ENCODE measurements at regions of chr2 and their contacts with region 1.

Region 1: GRCh38 chr2:177212106-177212890 is at the start of gene HNRNPA3:
- DNase-seq: peak; percentile 99 to 100 (median 100)
- ATAC-seq: peak; percentile 93
- H3K4me3 ChIP-seq: peak within 1 kb of the TSS; percentile 87
- H3K4me3 Mint-ChIP-seq: peak within 1 kb of the TSS; percentile 88 to 96 (median 94)
- H3K27ac ChIP-seq: peak within 1 kb of the TSS; percentile 99
- H3K27ac Mint-ChIP-seq: peak within 1 kb of the TSS; percentile 98 to 100 (median 99)
- H3K4me1 ChIP-seq: peaks cover 38 to 43% of the 10 kb centered on the region in 2 donors
- H3K4me1 Mint-ChIP-seq: peaks cover 27 to 60% (median 48%) of the 10 kb centered on the region in 7 donors
- H3K27me3 ChIP-seq: no peaks in the 10 kb centered on the region
- H3K27me3 Mint-ChIP-seq: peaks cover 0 to 6% (median 0%) of the 10 kb centered on the region in 5 donors
- total RNA-seq, gene HNRNPA3: 151 to 311 (median 184) TPM

Region 2: GRCh38 chr2:176269319-176270099 is 942.8 kb before region 1 on chr2 and contains the start of gene MTX2:
- CTCF ChIA-PET with region 1: no interaction called
- POLR2A ChIA-PET with region 1: no interaction called
- intact Hi-C with region 1: loop called in 1 of 2 experiments (anchors 1 kb)
- DNase-seq: peak; percentile 48 to 80 (median 75)
- ATAC-seq: peak; percentile 92
- H3K4me3 ChIP-seq: peak within 1 kb of the TSS; percentile 97
- H3K4me3 Mint-ChIP-seq: peak within 1 kb of the TSS; percentile 95 to 99 (median 97)
- H3K27ac ChIP-seq: peak within 1 kb of the TSS; percentile 84
- H3K27ac Mint-ChIP-seq: peak within 1 kb of the TSS; percentile 70 to 97 (median 92)
- H3K4me1 ChIP-seq: peaks cover 7 to 8% of the 10 kb centered on the region in 2 donors
- H3K4me1 Mint-ChIP-seq: peaks cover 16 to 46% (median 39%) of the 10 kb centered on the region in 7 donors
- H3K27me3 ChIP-seq: no peaks in the 10 kb centered on the region
- H3K27me3 Mint-ChIP-seq: peaks cover 0 to 19% (median 9%) of the 10 kb centered on the region in 5 donors
- total RNA-seq, gene MTX2: 6.6 to 14.3 (median 9.3) TPM

Region 3: DNA sequence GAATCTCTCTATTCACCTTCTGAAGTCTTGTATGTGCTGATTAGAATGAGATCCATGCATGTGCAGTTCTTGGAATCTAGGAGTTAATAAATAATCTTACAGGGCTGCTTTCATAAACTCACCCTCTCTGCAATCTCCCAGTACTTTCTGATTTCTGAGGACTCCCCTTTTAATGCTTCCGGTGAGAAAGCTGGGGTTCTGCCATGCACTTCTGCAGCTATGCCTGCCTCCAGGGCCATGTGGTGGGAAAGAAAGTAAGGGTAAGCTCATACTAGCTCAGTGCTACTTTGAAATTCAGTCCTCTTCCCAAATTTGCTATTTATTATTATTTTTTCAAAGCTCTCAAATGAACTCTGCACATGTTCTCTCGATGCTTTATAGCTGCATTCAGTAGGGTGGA is 510.1 kb before region 1 on chr2:
- CTCF ChIA-PET with region 1: no interaction called
- POLR2A ChIA-PET with region 1: no interaction called
- intact Hi-C with region 1: no loop called
- DNase-seq: no peak
- ATAC-seq: no peak
- H3K4me3 ChIP-seq: no peak overlapping the region
- H3K4me3 Mint-ChIP-seq: no peak overlapping the region
- H3K27ac ChIP-seq: no peak overlapping the region
- H3K27ac Mint-ChIP-seq: no peak overlapping the region
- H3K4me1 ChIP-seq: no peaks in the 10 kb centered on the region
- H3K4me1 Mint-ChIP-seq: no peaks in the 10 kb centered on the region
- H3K27me3 ChIP-seq: peaks cover 0 to 3% of the 10 kb centered on the region in 2 donors
- H3K27me3 Mint-ChIP-seq: peaks cover 15 to 42% (median 19%) of the 10 kb centered on the region in 5 donors

Region 4: GRCh38 chr2:177229448-177230242 is 17.3 kb after region 1 on chr2:
- CTCF ChIA-PET with region 1: interaction called, 3 read pairs
- POLR2A ChIA-PET with region 1: interaction called, 15 read pairs
- intact Hi-C with region 1: loop called (anchors 1 to 2 kb)
- DNase-seq: no peak
- ATAC-seq: no peak
- H3K4me3 ChIP-seq: no peak overlapping the region
- H3K4me3 Mint-ChIP-seq: no peak overlapping the region
- H3K27ac ChIP-seq: no peak overlapping the region
- H3K27ac Mint-ChIP-seq: peak overlapping the region; percentile 36 to 87 (median 74)
- H3K4me1 ChIP-seq: no peaks in the 10 kb centered on the region
- H3K4me1 Mint-ChIP-seq: peaks cover 21 to 57% (median 53%) of the 10 kb centered on the region in 7 donors
- H3K27me3 ChIP-seq: no peaks in the 10 kb centered on the region
- H3K27me3 Mint-ChIP-seq: no peaks in the 10 kb centered on the region

Region 5: GRCh38 chr2:177314194-177314593 is 101.9 kb after region 1 on chr2:
- CTCF ChIA-PET with region 1: no interaction called
- POLR2A ChIA-PET with region 1: interaction called, 14 read pairs
- intact Hi-C with region 1: loop called in 1 of 2 experiments (anchors 1 kb)
- DNase-seq: no peak
- ATAC-seq: no peak
- H3K4me3 ChIP-seq: no peak overlapping the region
- H3K4me3 Mint-ChIP-seq: no peak overlapping the region
- H3K27ac ChIP-seq: no peak overlapping the region
- H3K27ac Mint-ChIP-seq: peak overlapping the region in 7 of 9 donors; percentile 36 to 97 (median 73)
- H3K4me1 ChIP-seq: peaks cover 6 to 13% of the 10 kb centered on the region in 2 donors
- H3K4me1 Mint-ChIP-seq: peaks cover 17 to 54% (median 31%) of the 10 kb centered on the region in 7 donors
- H3K27me3 ChIP-seq: no peaks in the 10 kb centered on the region
- H3K27me3 Mint-ChIP-seq: no peaks in the 10 kb centered on the region

Region 6: DNA sequence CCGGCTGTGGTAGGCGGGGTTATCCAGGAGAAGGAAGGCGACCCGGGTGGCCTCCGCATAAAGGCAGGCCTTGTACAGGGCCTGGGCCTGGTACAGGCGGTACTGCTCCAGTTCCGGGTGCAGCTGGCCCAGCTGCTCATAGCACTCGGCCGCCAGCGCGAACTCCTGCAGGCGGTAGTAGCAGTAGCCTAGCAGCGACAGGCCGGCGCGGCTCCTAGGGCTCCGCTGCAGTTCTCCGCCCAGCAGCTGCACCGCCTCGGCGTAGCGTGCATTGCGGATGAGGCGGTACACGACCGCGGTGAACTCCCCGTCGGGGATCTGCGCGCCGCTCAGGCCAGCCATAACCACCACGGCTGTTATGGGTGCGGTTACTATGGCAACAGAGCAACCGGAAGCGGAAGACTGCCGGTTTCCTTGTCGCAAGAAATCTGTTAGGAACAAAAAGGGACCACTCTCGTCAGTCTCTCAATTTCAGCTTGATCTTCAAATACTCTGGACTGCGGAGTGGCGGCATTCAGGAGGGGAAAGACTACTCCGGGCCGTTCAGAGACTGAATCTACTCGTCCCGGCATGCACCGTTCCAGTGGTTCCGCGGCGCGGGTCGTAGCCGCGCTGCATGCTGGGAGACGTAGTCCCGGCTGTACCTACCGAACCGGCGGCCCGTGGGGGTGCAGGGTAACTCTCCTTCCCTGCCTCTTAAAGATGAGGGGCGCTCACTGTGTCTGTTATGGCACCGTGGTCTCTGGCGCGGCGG is 340.3 kb after region 1 on chr2:
- CTCF ChIA-PET with region 1: no interaction called
- POLR2A ChIA-PET with region 1: no interaction called
- intact Hi-C with region 1: loop called (anchors 1 kb)
- DNase-seq: peak; percentile 82 to 96 (median 94)
- ATAC-seq: peak; percentile 94
- H3K4me3 ChIP-seq: peak overlapping the region; percentile 89
- H3K4me3 Mint-ChIP-seq: peak overlapping the region; percentile 87 to 99 (median 94)
- H3K27ac ChIP-seq: peak overlapping the region; percentile 100
- H3K27ac Mint-ChIP-seq: peak overlapping the region; percentile 98 to 100 (median 99)
- H3K4me1 ChIP-seq: no peaks in the 10 kb centered on the region
- H3K4me1 Mint-ChIP-seq: peaks cover 4 to 29% (median 14%) of the 10 kb centered on the region in 7 donors
- H3K27me3 ChIP-seq: no peaks in the 10 kb centered on the region
- H3K27me3 Mint-ChIP-seq: peaks cover 0 to 14% (median 4%) of the 10 kb centered on the region in 5 donors

Region 7: DNA sequence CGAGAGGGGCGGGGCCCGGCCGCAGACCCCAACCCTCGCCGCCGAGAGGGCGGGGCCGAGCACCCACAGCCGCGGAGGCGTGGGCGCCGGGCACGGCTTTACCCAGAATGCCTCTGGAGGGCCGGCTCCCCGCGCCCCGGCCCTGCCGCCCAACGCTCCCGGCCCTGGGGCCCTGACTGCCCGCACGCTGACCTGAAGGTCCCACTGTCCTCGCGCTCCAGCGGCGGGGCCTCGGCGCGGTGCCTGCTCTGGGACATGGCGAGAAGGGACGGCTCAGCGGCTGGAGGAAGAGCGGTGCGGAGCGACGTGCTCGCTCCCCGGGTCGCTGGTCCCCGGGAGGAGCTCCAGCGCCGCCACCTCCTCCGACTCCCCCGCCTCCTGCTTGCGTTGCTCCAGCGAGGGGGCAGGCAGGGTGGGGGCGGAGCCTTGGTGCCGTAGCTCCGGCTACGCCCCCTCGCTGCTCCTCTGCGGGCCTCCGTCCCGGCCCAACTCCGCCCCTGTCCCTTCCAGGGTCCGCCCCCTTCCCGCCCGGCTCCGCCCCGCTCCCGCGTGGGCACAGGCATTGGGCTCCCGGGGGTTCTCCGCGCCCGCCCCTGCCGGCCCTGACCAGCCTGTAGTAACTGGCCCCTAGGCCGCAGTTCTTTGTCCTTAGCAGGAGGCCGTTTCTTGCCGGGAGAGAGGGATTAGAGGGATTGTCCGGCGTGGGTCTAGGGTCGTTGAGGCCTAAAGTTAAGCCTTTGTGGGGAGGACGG is 1238.7 kb after region 1 on chr2 and contains the starts of genes PJVK and PRKRA:
- CTCF ChIA-PET with region 1: no interaction called
- POLR2A ChIA-PET with region 1: no interaction called
- intact Hi-C with region 1: loop called in 1 of 2 experiments (anchors 2 kb)
- DNase-seq: peak; percentile 92 to 99 (median 93)
- ATAC-seq: peak; percentile 94
- H3K4me3 ChIP-seq: peak within 1 kb of the TSS; percentile 94
- H3K4me3 Mint-ChIP-seq: peak within 1 kb of the TSS; percentile 90 to 96 (median 90)
- H3K27ac ChIP-seq: peak within 1 kb of the TSS; percentile 100
- H3K27ac Mint-ChIP-seq: peak within 1 kb of the TSS; percentile 88 to 98 (median 95)
- H3K4me1 ChIP-seq: peaks cover 12 to 25% of the 10 kb centered on the region in 2 donors
- H3K4me1 Mint-ChIP-seq: peaks cover 12 to 36% (median 30%) of the 10 kb centered on the region in 7 donors
- H3K27me3 ChIP-seq: no peaks in the 10 kb centered on the region
- H3K27me3 Mint-ChIP-seq: peaks cover 0 to 9% (median 0%) of the 10 kb centered on the region in 5 donors
- total RNA-seq, gene PJVK: 2.1 to 6.3 (median 3.8) TPM
- total RNA-seq, gene PRKRA: 40.8 to 113 (median 59.4) TPM

Measured in naive thymus-derived CD4-positive, alpha-beta T cell (primary cell).